ENCODE measurements at regions of chr15 and their contacts with region 1.

Region 1: DNA sequence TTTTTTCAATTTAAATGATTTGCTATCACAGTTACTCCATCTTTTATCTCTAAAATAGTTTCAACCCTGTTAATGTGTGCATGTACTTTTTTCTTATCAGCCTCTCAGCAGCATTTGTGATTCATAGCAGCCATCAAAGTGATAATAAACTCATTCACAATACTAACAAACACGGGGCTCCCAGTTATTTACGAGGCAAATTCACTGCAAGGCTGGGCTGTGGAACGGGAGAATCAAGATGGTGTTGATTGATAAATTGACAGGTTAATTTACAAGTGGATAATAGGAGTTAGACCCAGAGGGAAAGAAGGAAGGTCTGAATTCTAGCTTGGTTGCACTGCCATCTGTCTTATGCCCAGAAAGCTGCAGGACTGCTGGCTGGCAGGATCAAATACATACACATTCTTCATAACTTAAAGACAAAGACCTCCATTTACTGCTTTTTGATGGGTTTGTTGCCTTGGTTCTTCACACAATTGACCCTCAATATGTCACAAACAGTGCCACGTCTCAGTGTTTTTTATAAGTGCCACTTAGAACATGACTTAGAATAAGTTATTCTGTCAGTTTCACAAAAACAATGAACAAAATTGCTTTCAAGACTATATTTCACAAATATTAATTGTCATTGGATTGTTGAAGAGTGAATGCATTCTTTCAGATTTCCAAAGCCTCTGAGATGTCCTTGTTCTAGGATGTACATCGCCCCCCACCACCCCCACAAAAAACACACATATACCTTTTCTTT is 562.8 kb downstream of the NR2F2 start:
- DNase-seq: peak; percentile 90
- H3K4me3 ChIP-seq: no peak overlapping the region
- H3K27ac ChIP-seq: peak overlapping the region; percentile 89
- H3K4me1 ChIP-seq: peaks cover 77% of the 10 kb centered on the region
- H3K27me3 ChIP-seq: no peaks in the 10 kb centered on the region
- CTCF ChIP-seq: peak; percentile 91

Region 2: DNA sequence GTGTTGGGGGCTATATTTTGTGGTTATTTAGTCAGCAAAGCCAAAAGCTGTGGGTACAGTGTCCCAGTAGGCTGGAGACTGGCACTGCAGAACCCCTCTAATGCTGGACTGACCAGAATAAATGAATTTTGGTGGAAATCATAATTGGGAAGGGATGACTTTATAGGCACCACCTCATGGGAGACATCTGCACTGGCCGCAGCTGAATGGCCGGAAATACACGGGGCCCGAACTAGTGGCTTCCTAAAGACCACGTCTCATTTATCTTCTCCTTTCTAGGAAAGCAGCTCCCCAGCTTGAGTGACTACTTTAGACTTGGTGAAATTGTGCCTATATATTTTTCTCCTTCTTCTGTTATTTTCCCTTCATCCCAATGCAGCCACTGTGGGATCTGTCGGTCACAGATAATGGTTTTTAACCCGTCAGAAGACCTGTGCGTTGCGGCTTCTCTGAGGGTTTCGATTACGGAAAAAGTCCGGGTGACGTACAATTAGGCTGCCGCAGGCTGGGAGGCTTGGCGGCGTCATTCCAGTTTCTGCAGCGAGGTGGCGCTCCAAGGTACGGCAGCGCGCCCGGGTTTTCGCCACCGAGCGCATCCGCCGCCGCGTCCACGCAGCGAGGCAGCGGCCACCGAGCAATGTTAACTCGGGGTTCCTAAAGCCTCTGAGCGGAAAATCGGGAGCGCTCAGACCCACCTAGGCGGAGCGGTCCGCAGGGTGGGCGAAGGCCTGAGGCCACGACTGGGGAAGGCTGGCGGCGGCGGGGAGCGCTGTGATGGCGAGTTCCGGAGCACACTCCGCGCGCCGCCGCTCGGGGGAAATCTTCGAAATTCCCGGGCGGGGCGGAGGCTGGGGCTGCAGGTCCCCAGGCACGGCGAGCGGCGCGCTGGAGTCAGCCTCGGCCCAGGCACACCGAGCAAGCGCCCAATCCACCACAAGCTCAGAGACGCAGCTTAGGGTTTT is 536.6 kb before region 1 on chr15:
- CTCF ChIA-PET with region 1: interaction called, 4 read pairs
- POLR2A ChIA-PET with region 1: no interaction called
- intact Hi-C with region 1: loop called (anchors 1 kb)
- DNase-seq: peak; percentile 92
- H3K4me3 ChIP-seq: peak overlapping the region; percentile 60
- H3K27ac ChIP-seq: peak overlapping the region; percentile 93
- H3K4me1 ChIP-seq: peaks cover 70% of the 10 kb centered on the region
- H3K27me3 ChIP-seq: no peaks in the 10 kb centered on the region
- CTCF ChIP-seq: peak; percentile 97

Region 3: GRCh38 chr15:96687388-96688107 is 205.8 kb before region 1 on chr15:
- CTCF ChIA-PET with region 1: no interaction called
- POLR2A ChIA-PET with region 1: no interaction called
- intact Hi-C with region 1: loop called (anchors 2 kb)
- DNase-seq: peak; percentile 55
- H3K4me3 ChIP-seq: no peak overlapping the region
- H3K27ac ChIP-seq: peak overlapping the region; percentile 55
- H3K4me1 ChIP-seq: peaks cover 37% of the 10 kb centered on the region
- H3K27me3 ChIP-seq: no peaks in the 10 kb centered on the region
- CTCF ChIP-seq: peak; percentile 35; the same call in 1 of the 2 replicates

Region 4: DNA sequence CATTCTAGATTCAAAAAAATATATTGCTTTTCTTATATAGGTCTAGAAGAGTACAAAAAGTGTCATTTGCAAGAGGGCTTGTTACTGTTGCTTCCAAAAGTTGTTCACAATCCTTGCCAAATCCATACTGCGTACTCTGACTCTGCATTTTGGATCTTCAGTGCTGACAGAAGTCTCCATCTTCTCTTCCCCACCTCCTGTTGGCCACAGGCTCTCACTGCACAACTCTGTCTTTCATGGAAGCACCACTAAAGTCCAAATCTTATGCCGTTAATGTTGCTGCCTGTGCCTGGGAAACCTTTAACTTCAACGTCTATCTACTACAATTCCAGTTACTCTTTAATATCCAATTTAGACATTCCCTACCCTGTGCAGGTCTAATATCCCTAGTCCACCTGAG is 143.0 kb before region 1 on chr15:
- CTCF ChIA-PET with region 1: no interaction called
- POLR2A ChIA-PET with region 1: no interaction called
- intact Hi-C with region 1: no loop called
- DNase-seq: peak; percentile 18
- H3K4me3 ChIP-seq: no peak overlapping the region
- H3K27ac ChIP-seq: no peak overlapping the region
- H3K4me1 ChIP-seq: peaks cover 15% of the 10 kb centered on the region
- H3K27me3 ChIP-seq: no peaks in the 10 kb centered on the region
- CTCF ChIP-seq: peak; percentile 44

Region 5: GRCh38 chr15:96914081-96914480 is 20.7 kb after region 1 on chr15:
- CTCF ChIA-PET with region 1: no interaction called
- POLR2A ChIA-PET with region 1: no interaction called
- intact Hi-C with region 1: no loop called
- DNase-seq: no peak
- H3K4me3 ChIP-seq: no peak overlapping the region
- H3K27ac ChIP-seq: no peak overlapping the region
- H3K4me1 ChIP-seq: no peaks in the 10 kb centered on the region
- H3K27me3 ChIP-seq: no peaks in the 10 kb centered on the region
- CTCF ChIP-seq: no peak

Region 6: GRCh38 chr15:96958721-96959120 is 65.4 kb after region 1 on chr15:
- CTCF ChIA-PET with region 1: no interaction called
- POLR2A ChIA-PET with region 1: no interaction called
- intact Hi-C with region 1: no loop called
- DNase-seq: peak; percentile 31
- H3K4me3 ChIP-seq: no peak overlapping the region
- H3K27ac ChIP-seq: no peak overlapping the region
- H3K4me1 ChIP-seq: peaks cover 10% of the 10 kb centered on the region
- H3K27me3 ChIP-seq: no peaks in the 10 kb centered on the region
- CTCF ChIP-seq: no peak

Region 7: DNA sequence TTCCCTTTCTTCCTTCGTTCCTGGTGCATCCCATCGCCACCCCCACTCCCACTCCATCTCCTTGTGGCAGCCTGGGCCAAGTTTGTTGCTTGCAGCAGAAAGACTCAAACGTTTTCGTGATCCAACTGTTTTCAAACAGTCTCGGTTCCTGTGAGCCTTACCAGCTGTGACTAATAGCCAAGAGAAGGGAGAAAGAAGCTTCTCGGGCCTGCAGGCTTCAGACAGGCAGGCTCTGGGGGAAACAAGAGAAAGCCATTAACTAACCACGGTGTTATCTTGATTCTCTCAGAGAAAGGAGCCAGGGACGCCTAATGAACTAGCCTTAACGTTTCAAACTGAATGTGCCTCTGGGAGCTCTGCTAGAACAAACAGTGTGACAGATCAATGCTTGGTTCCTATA is 179.2 kb after region 1 on chr15:
- CTCF ChIA-PET with region 1: interaction called, 4 read pairs
- POLR2A ChIA-PET with region 1: no interaction called
- intact Hi-C with region 1: loop called (anchors 2 kb)
- DNase-seq: no peak
- H3K4me3 ChIP-seq: no peak overlapping the region
- H3K27ac ChIP-seq: peak overlapping the region; percentile 72
- H3K4me1 ChIP-seq: peaks cover 56% of the 10 kb centered on the region
- H3K27me3 ChIP-seq: no peaks in the 10 kb centered on the region
- CTCF ChIP-seq: no peak

Region 8: GRCh38 chr15:97259943-97260342 is 366.6 kb after region 1 on chr15:
- CTCF ChIA-PET with region 1: no interaction called
- POLR2A ChIA-PET with region 1: no interaction called
- intact Hi-C with region 1: no loop called
- DNase-seq: no peak
- H3K4me3 ChIP-seq: no peak overlapping the region
- H3K27ac ChIP-seq: no peak overlapping the region
- H3K4me1 ChIP-seq: peaks cover 7% of the 10 kb centered on the region
- H3K27me3 ChIP-seq: no peaks in the 10 kb centered on the region
- CTCF ChIP-seq: no peak

Region 9: GRCh38 chr15:97759363-97759762 is 866.0 kb after region 1 on chr15:
- CTCF ChIA-PET with region 1: no interaction called
- POLR2A ChIA-PET with region 1: no interaction called
- intact Hi-C with region 1: loop called (anchors 5 kb)
- DNase-seq: no peak
- H3K4me3 ChIP-seq: no peak overlapping the region
- H3K27ac ChIP-seq: no peak overlapping the region
- H3K4me1 ChIP-seq: no peaks in the 10 kb centered on the region
- H3K27me3 ChIP-seq: no peaks in the 10 kb centered on the region
- CTCF ChIP-seq: no peak

Measured in A673 (cell line).